Activated CD8-positive, alpha-beta T cell treated with anti-CD3 and anti-CD28 coated beads for 36 hours (primary cell): ENCODE measurements at regions of chr2 and their contacts with region 1.

Region 1: GRCh38 chr2:85888684-85889626 is at the start of gene ST3GAL5:
- DNase-seq: peak; percentile 91
- ATAC-seq: peak; percentile 81
- H3K4me3 Mint-ChIP-seq: peak within 1 kb of the TSS; percentile 94
- H3K27ac Mint-ChIP-seq: peak within 1 kb of the TSS; percentile 92
- H3K4me1 Mint-ChIP-seq: peaks cover 67% of the 10 kb centered on the region
- H3K27me3 Mint-ChIP-seq: no peaks in the 10 kb centered on the region
- CTCF ChIP-seq: peak; percentile 82
- total RNA-seq, gene ST3GAL5: 21.1 to 21.5 TPM

Region 2: GRCh38 chr2:85797921-85798320 is 91.0 kb before region 1 on chr2:
- CTCF ChIA-PET with region 1: no interaction called
- POLR2A ChIA-PET with region 1: no interaction called
- intact Hi-C with region 1: no loop called
- DNase-seq: no peak
- ATAC-seq: no peak
- H3K4me3 Mint-ChIP-seq: no peak overlapping the region
- H3K27ac Mint-ChIP-seq: no peak overlapping the region
- H3K4me1 Mint-ChIP-seq: no peaks in the 10 kb centered on the region
- H3K27me3 Mint-ChIP-seq: peaks cover 5% of the 10 kb centered on the region
- CTCF ChIP-seq: no peak

Region 3: GRCh38 chr2:85838181-85838580 is 50.8 kb before region 1 on chr2:
- CTCF ChIA-PET with region 1: interaction called, 22 read pairs
- POLR2A ChIA-PET with region 1: no interaction called
- intact Hi-C with region 1: no loop called
- DNase-seq: no peak
- ATAC-seq: no peak
- H3K4me3 Mint-ChIP-seq: no peak overlapping the region
- H3K27ac Mint-ChIP-seq: no peak overlapping the region
- H3K4me1 Mint-ChIP-seq: peaks cover 19% of the 10 kb centered on the region
- H3K27me3 Mint-ChIP-seq: no peaks in the 10 kb centered on the region
- CTCF ChIP-seq: no peak

Region 4: DNA sequence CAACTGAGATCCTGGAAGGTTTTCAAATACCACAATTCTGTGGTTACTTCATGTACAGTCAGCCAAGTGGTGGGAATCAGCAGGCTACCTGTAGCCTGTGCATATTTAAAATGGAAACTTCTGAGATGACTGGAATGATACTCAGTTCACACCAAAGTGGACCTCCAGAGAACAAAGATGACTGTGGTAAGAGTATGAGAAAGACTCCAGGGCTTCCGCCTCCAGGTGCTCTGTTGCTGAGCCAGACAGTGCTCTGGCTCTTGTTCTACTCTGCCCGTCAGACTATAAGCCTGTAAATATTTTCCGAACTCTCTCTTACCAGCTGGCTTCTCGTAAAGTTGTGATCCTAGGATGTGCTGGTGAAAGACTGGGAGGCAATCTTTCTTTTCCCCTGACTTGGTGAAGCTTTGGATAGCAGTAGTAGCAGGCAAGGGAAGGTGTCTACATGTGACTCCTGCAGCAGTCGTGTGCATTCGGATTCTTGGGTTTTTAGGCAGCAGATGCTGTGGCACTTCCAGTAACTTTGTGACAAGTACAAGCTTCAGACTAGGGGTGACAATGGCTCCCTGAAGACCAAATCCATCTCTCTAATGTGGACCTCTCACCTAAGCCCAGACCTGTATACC is 23.3 kb before region 1 on chr2:
- CTCF ChIA-PET with region 1: interaction called, 29 read pairs
- POLR2A ChIA-PET with region 1: interaction called, 5 read pairs
- intact Hi-C with region 1: no loop called
- DNase-seq: peak; percentile 42
- ATAC-seq: peak; percentile 71
- H3K4me3 Mint-ChIP-seq: no peak overlapping the region
- H3K27ac Mint-ChIP-seq: no peak overlapping the region
- H3K4me1 Mint-ChIP-seq: peaks cover 56% of the 10 kb centered on the region
- H3K27me3 Mint-ChIP-seq: no peaks in the 10 kb centered on the region
- CTCF ChIP-seq: no peak

Region 5: DNA sequence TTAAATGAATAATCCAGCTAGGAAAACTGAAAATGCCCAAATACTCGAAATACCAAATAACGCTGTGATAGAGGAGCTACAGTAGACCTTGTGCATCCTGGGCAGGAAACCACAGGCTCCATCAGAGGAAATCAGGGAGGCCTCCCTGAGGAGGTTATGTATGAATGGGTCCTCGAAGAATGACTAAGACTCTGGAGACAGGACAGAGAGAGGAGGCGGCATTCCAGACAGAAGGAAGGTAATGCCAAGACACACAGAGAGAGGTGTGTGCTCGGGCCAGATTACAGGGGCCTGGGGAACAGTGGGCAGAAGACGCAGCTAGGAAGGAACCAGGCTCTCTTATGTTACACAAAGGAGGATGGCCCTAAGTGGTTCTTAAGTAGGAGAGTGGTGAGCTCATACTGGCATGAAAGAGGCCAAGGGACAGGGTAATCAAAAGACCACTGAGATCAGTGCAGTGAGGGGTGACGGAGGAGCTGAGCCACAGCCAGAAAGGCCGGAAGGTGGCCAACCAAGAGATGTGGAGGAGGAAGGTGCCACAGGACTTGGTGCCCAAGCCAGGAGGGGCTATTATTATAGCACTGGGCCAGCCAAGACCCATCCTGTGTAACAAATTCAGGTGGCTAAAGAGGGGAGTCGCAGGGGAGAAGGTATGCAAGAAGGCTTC is 10.1 kb before region 1 on chr2:
- CTCF ChIA-PET with region 1: interaction called, 18 read pairs
- POLR2A ChIA-PET with region 1: interaction called, 3 read pairs
- intact Hi-C with region 1: no loop called
- DNase-seq: no peak
- ATAC-seq: peak; percentile 7
- H3K4me3 Mint-ChIP-seq: no peak overlapping the region
- H3K27ac Mint-ChIP-seq: no peak overlapping the region
- H3K4me1 Mint-ChIP-seq: peaks cover 61% of the 10 kb centered on the region
- H3K27me3 Mint-ChIP-seq: no peaks in the 10 kb centered on the region
- CTCF ChIP-seq: no peak

Region 6: DNA sequence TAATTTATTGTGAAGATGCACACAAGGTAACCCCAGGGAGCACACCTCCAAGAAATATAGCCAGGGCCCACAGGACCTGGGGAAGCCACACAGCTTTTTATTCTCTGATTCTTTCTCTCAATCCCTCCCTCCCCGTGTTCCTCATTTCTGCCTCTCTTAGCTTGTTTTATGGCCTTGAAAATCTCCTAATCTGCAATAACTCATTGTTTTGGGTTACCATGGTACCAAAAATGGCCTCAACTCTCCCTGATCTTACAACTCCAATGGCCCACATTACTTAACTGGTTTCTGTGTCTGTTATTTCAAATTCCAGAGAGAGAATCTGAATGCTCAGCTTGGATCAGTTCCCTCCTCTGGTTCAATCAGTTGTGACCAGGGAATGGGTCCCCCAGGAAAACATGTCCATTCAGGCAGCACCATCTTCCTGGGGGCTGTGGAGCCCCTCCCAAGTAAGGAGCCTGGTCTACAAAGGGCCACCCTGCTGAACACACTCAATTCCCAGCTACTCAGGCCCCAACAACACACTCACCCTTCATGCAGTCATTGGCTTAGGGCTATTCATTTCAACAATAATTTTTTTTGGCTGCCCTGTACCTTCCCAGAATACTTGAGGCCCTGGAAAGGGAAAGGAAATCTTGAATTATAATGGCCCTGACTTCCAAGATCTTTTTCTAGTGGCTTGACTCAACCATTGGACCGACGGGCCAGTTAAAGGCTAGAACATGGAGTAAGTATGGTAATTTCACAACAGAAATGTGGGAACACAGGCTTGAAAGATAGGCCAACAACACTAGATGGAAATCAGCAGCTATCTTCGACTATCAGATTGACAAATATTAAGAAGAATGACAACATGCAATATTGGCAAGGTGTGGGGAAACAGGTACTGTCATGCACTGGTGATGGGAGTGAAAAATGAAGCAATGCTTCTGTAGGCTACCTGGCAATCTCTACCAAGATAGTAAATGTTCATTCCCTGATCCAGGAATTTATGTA is 41.5 kb after region 1 on chr2:
- CTCF ChIA-PET with region 1: interaction called, 11 read pairs
- POLR2A ChIA-PET with region 1: no interaction called
- intact Hi-C with region 1: no loop called
- DNase-seq: no peak
- ATAC-seq: no peak
- H3K4me3 Mint-ChIP-seq: no peak overlapping the region
- H3K27ac Mint-ChIP-seq: no peak overlapping the region
- H3K4me1 Mint-ChIP-seq: peaks cover 29% of the 10 kb centered on the region
- H3K27me3 Mint-ChIP-seq: no peaks in the 10 kb centered on the region
- CTCF ChIP-seq: no peak

Region 7: GRCh38 chr2:86035883-86036668 is 147.1 kb after region 1 on chr2:
- CTCF ChIA-PET with region 1: interaction called, 63 read pairs
- POLR2A ChIA-PET with region 1: interaction called, 19 read pairs
- intact Hi-C with region 1: loop called (anchors 2 kb)
- DNase-seq: peak; percentile 86
- ATAC-seq: peak; percentile 55
- H3K4me3 Mint-ChIP-seq: peak overlapping the region; percentile 63
- H3K27ac Mint-ChIP-seq: peak overlapping the region; percentile 97
- H3K4me1 Mint-ChIP-seq: peaks cover 76% of the 10 kb centered on the region
- H3K27me3 Mint-ChIP-seq: no peaks in the 10 kb centered on the region
- CTCF ChIP-seq: no peak

Region 8: GRCh38 chr2:86079981-86080911 is 191.3 kb after region 1 on chr2:
- CTCF ChIA-PET with region 1: interaction called, 60 read pairs
- POLR2A ChIA-PET with region 1: no interaction called
- intact Hi-C with region 1: no loop called
- DNase-seq: peak; percentile 87
- ATAC-seq: peak; percentile 78
- H3K4me3 Mint-ChIP-seq: no peak overlapping the region
- H3K27ac Mint-ChIP-seq: peak overlapping the region; percentile 80
- H3K4me1 Mint-ChIP-seq: peaks cover 25% of the 10 kb centered on the region
- H3K27me3 Mint-ChIP-seq: no peaks in the 10 kb centered on the region
- CTCF ChIP-seq: peak; percentile 75